ENCODE measurements at regions of chr3 and their contacts with region 1.

Region 1: DNA sequence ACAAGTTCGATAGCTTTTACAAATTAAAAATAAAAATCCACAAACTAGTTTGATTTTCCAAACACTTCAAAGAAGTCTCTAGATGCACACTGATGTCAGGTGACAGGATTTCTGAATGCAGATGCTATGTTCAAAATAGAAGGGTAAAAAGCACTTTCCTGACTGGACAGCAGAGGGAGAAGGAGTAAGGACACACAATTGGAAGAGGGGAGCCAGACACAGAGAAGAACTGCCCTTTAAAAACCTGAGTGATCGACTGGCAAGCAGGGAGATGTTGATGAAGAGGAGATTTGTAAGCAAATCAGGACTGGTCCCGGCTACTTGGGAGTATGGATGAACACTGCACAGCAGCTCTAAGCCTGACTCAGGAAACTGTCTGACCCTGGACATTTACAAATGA is 612.8 kb downstream of the MAGI1 start:
- DNase-seq: no peak
- H3K4me3 ChIP-seq: no peak overlapping the region
- CTCF ChIP-seq: peak; percentile 49

Region 2: DNA sequence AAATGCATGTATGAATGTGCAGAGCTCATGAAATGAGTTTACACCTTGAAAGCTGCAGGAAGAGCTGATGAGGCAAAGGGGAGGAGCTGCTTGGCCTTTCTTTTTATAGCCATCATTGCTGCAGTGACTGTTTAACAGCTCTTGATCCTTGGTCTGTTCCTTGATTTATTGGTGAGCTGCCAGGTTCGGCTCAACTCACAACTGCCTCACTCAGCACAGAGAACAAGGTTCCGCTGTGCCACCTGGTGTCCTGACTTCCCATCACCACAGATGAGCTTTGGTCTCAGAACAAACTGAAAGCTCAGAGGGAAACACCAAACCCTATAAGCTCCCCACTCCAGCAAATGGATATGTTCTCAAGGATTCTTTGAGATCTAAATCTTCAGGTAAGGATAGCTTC is 13.3 kb before region 1 on chr3:
- CTCF ChIA-PET with region 1: interaction called, 13 read pairs
- POLR2A ChIA-PET with region 1: no interaction called
- DNase-seq: no peak
- H3K4me3 ChIP-seq: no peak overlapping the region
- CTCF ChIP-seq: no peak

Region 3: DNA sequence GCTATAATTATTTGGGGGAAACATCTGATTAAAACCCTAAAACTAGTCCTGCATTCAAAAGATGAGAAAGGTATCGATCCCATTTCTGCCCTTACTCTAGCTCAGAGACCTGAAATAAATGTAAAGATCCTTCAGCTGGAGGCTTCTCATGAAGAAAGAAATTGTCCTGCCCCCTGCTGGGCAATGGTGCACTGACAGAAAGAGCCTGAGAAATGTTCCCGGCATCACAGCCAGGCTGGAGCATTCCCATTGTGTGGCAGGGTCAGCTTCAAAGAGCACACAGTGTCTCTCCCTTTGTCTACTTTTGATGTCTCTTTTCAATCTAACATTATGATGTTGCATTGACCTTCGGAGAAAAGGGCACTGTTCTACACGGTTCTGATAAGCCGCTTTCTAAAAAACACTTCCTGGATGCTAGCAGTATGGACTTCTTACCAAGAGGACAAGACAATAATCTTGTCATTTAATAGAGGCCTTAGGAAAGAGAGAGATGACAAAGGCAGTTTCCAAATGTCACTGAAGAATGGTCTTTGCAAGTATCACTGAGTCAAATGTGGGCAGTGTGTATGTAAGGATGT is 325.3 kb after region 1 on chr3:
- CTCF ChIA-PET with region 1: interaction called, 25 read pairs
- POLR2A ChIA-PET with region 1: no interaction called
- DNase-seq: no peak
- H3K4me3 ChIP-seq: no peak overlapping the region
- CTCF ChIP-seq: peak; percentile 70